ENCODE measurements at regions of chr9 and their contacts with region 1.

Region 1: DNA sequence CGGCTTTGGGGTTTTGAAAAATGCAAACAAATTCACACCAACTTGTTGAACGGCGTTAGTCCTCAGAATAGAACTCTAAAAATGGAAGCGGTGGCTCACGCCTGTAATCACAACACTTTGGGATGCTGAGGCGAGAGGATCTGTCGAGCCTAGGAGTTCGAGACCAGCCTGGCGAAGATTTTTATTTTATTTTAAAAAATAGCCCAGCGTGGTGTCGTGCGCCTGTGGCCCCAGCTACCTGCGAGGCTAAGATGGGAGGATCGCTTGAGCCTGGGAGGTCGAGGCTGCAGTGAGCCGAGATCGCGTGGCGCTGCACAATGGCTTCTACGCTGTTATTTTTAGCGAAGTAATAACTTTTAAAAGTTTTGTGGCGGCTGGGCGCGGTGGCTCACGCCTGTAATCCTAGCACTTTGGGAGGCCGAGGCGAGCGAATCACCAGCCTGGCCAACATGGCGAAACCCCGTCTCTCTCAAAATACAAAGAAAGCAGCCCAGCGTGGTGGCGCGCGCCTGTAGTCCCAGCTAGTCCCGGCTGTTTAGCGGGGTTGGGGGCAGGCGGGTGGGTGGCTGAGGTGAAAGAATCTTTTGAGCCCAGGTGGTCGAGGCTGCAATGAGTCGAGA is 699 bp upstream of the PLIN2 start:
- DNase-seq: peak in 3 of 5 donors; percentile 36 to 52 (median 37)
- H3K4me3 ChIP-seq: peak overlapping the region; percentile 57 to 79
- H3K4me3 Mint-ChIP-seq: peak overlapping the region; percentile 92 to 98 (median 96)
- H3K27ac ChIP-seq: peak overlapping the region; percentile 73
- H3K27ac Mint-ChIP-seq: peak overlapping the region; percentile 90 to 96 (median 94)
- H3K4me1 ChIP-seq: peaks cover 61% of the 10 kb centered on the region
- H3K4me1 Mint-ChIP-seq: peaks cover 38 to 63% (median 48%) of the 10 kb centered on the region in 4 donors
- H3K27me3 ChIP-seq: no peaks in the 10 kb centered on the region
- H3K27me3 Mint-ChIP-seq: no peaks in the 10 kb centered on the region

Region 2: DNA sequence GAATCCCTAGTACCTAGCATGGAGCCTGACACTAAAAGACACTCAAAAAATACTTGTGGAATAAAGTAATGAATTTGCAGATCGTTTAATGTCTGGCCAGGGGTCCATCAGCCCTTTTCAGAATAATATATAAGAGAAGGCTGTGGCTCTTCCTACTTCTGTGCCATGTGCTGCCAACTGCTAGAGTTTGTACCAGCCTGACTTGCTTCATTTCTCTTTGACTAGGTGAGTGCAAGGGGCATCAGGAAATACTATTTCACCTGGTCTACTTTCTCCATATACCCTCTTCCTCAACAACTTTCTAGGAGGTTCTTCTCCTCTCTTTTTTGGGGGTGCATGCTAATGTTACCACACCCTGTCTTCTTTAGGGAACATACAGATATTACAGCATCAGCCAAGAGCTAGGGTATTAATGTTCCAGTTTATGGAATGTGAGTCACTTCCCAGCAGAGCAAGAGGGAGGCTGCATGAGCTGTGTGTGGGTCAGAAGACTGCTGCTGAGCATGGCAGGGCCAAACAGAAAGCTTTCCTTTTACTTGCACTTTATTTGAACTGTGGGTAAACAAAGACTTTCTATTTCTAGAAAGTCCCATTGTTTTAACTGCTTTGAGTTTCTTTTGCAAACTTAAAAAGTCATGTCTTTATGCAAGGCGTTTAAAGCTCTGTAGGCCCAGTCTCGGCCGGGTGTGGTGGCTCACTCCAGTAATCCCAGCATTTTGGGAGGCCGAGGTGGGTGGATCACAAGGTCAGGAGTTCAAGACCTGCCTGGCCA is 495.2 kb before region 1 on chr9:
- CTCF ChIA-PET with region 1: no interaction called
- POLR2A ChIA-PET with region 1: no interaction called
- intact Hi-C with region 1: no loop called
- DNase-seq: no peak
- H3K4me3 ChIP-seq: no peak overlapping the region
- H3K4me3 Mint-ChIP-seq: no peak overlapping the region
- H3K27ac ChIP-seq: no peak overlapping the region
- H3K27ac Mint-ChIP-seq: no peak overlapping the region
- H3K4me1 ChIP-seq: no peaks in the 10 kb centered on the region
- H3K4me1 Mint-ChIP-seq: no peaks in the 10 kb centered on the region
- H3K27me3 ChIP-seq: no peaks in the 10 kb centered on the region
- H3K27me3 Mint-ChIP-seq: peaks cover 0 to 2% of the 10 kb centered on the region in 2 donors

Region 3: GRCh38 chr9:19057033-19057432 is 71.0 kb before region 1 on chr9:
- CTCF ChIA-PET with region 1: no interaction called
- POLR2A ChIA-PET with region 1: no interaction called
- intact Hi-C with region 1: no loop called
- DNase-seq: no peak
- H3K4me3 ChIP-seq: no peak overlapping the region
- H3K4me3 Mint-ChIP-seq: no peak overlapping the region
- H3K27ac ChIP-seq: no peak overlapping the region
- H3K27ac Mint-ChIP-seq: no peak overlapping the region
- H3K4me1 ChIP-seq: peaks cover 7% of the 10 kb centered on the region
- H3K4me1 Mint-ChIP-seq: peaks cover 2 to 18% (median 10%) of the 10 kb centered on the region in 4 donors
- H3K27me3 ChIP-seq: no peaks in the 10 kb centered on the region
- H3K27me3 Mint-ChIP-seq: no peaks in the 10 kb centered on the region

Region 4: DNA sequence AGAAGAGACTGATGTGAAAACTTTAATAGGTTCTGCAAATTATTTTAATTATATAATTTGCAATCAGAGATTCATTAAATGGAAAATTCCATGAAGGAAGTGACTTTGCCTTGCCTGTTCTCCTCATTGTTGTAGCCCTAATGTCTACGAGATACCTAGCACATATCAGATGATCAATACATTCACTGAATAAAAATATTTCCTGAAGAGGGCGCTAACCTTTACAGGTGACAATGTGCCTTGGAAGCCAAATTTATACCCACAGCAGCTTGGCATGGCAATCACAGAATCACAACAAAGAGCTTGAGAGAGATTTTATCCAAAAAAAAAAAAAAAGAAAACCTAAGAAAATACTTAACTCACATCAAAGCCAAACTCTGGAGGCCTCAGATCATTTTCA is 42.7 kb before region 1 on chr9:
- CTCF ChIA-PET with region 1: interaction called, 6 read pairs
- POLR2A ChIA-PET with region 1: no interaction called
- intact Hi-C with region 1: loop called (anchors 5 kb)
- DNase-seq: peak in 4 of 5 donors; percentile 49 to 65 (median 54)
- H3K4me3 ChIP-seq: no peak overlapping the region
- H3K4me3 Mint-ChIP-seq: no peak overlapping the region
- H3K27ac ChIP-seq: no peak overlapping the region
- H3K27ac Mint-ChIP-seq: peak overlapping the region in 2 of 7 donors; percentile 19 to 58
- H3K4me1 ChIP-seq: no peaks in the 10 kb centered on the region
- H3K4me1 Mint-ChIP-seq: peaks cover 0 to 4% (median 3%) of the 10 kb centered on the region in 4 donors
- H3K27me3 ChIP-seq: no peaks in the 10 kb centered on the region
- H3K27me3 Mint-ChIP-seq: no peaks in the 10 kb centered on the region

Region 5: DNA sequence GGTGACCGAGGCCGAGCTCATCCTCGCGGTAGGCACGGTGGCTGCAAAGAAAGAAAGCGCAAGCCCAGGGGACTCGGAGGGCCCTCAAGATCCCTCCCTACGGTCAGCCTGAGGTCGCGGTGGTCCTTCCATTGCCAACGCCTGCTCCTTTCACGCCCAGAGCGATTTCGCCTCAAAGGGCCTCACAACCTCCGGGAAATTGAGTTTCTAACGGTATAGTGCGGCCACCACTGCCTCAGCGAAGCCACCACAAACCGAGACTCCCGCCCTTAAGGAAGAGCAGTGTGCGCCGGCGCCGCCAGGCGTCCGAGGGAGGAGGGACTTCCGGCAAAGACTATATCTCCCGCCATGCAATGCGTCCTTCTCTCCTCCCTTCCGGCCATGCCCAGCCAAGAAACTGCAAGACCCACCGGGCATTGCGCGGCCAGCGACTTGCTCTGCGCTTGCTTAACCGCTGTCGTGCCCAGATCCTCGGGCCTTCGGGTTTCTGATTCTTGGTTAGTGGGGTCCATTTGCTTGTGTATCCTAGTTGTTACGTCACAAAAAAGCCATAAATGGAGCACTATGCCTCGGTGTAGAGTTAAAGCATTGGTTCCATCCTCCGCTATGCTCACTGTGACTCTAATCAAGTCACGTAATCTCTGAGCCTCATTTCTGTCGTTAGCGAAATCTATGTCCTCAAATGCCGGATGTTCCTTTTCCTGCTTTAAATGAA is 25.2 kb before region 1 on chr9 and contains the start of gene HAUS6:
- CTCF ChIA-PET with region 1: interaction called, 5 read pairs
- POLR2A ChIA-PET with region 1: interaction called, 6 read pairs
- intact Hi-C with region 1: loop called (anchors 1 kb)
- DNase-seq: peak; percentile 93 to 98 (median 96)
- H3K4me3 ChIP-seq: peak within 1 kb of the TSS; percentile 73 to 74
- H3K4me3 Mint-ChIP-seq: peak within 1 kb of the TSS; percentile 91 to 98 (median 98)
- H3K27ac ChIP-seq: peak within 1 kb of the TSS; percentile 74
- H3K27ac Mint-ChIP-seq: peak within 1 kb of the TSS; percentile 91 to 98 (median 96)
- H3K4me1 ChIP-seq: peaks cover 28% of the 10 kb centered on the region
- H3K4me1 Mint-ChIP-seq: peaks cover 15 to 39% (median 20%) of the 10 kb centered on the region in 4 donors
- H3K27me3 ChIP-seq: no peaks in the 10 kb centered on the region
- H3K27me3 Mint-ChIP-seq: no peaks in the 10 kb centered on the region
- total RNA-seq, gene HAUS6: 19.4 to 20.9 TPM

Region 6: DNA sequence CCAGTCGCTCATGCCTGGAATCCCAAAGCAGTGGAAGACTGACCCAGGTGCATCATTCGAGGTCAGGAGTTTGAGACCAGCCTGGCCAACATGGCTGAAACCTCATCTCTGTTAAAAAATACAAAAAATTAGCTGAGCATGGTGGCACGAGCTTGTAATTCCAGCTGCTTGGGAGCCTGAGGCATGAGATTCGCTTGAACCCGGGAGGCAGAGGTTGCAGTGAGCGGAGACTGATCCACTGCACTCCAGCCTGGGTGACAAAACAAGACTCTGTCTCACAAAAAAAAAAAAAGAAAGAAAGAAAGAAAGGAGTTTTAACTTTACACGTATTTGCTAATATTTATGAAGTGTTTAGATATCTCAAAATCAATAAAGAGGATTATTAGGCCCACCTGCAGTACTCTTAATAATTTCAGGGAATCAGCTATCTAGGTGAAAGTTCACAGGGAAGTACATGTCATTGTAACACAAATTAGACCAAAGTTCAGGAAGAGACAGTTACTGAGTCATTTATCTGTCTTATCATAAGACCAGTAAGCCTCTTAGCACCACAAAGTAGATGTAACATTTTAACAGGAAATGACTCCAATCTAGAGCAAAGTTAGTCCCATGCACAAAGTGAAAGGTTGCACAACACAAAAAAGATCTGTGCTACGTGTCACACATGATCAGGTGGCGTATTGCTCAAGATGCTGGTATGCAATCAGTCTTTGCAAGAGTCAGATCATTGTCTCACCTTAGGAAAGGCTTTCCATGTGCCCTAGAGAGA is 33.5 kb after region 1 on chr9:
- CTCF ChIA-PET with region 1: no interaction called
- POLR2A ChIA-PET with region 1: interaction called, 20 read pairs
- intact Hi-C with region 1: loop called (anchors 1 kb)
- DNase-seq: peak; percentile 50 to 75 (median 60)
- H3K4me3 ChIP-seq: no peak overlapping the region
- H3K4me3 Mint-ChIP-seq: peak overlapping the region in 7 of 8 donors; percentile 56 to 75 (median 67)
- H3K27ac ChIP-seq: peak overlapping the region; percentile 52
- H3K27ac Mint-ChIP-seq: peak overlapping the region; percentile 73 to 96 (median 89)
- H3K4me1 ChIP-seq: peaks cover 18% of the 10 kb centered on the region
- H3K4me1 Mint-ChIP-seq: peaks cover 11 to 19% (median 14%) of the 10 kb centered on the region in 4 donors
- H3K27me3 ChIP-seq: no peaks in the 10 kb centered on the region
- H3K27me3 Mint-ChIP-seq: no peaks in the 10 kb centered on the region